HepG2 (cell line): ENCODE measurements at regions of chr1 and their contacts with region 1.

Region 1: DNA sequence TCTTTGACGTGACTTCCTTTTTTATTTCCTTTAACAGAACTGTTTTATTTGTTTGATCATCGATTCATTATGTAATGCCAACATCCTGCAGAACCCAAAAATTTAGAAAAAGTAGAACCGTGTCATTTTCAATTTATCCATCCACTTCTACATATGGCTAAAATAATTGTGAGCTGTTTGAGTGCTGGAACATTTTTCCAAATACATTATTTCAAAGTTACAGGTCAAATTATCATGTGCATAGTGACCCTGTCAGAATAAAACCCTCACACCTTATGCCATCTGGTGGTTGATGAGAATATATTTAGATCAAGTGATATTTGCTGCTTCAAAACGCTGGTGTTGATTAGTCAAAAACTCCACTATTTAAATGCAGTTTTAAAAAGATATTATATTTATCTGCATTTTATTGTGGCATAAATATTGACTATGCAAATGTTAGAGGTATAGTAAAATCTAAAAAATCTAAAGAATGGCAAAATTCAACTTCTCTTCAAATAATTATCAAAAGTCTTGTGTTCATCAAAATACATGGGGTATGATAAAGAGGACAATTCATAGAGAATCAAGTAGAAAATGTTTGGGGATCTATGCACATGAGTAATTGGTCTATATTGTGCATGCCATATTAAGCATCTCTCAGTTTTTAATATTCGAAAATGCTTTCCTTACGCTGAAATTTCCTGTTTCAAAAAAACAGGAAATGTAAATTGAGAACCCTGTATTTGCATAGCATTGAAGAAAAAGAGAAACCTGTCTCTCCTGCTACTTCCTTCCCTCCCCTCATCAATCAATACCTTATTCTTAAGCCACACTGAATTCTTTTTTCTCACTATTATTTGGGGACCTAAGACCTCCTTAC is 39.7 kb downstream of the UBE2U start:
- DNase-seq: peak; percentile 14
- ATAC-seq: no peak
- H3K4me3 ChIP-seq: no peak overlapping the region
- H3K27ac ChIP-seq: no peak overlapping the region
- H3K4me1 ChIP-seq: peaks cover 15% of the 10 kb centered on the region; the same call in 1 of the 2 replicates
- H3K27me3 ChIP-seq: peaks cover 0 to 2% of the 10 kb centered on the region in 2 experiments; a peak in 1 of 5 replicates
- CTCF ChIP-seq: peak; percentile 37
- EP300 ChIP-seq: no peak
- POLR2A ChIP-seq: no peak
- RAD21 ChIP-seq: no peak

Region 2: GRCh38 chr1:63316984-63317816 is 925.9 kb before region 1 on chr1:
- CTCF ChIA-PET with region 1: no interaction called
- POLR2A ChIA-PET with region 1: no interaction called
- in situ Hi-C with region 1: no loop called
- intact Hi-C with region 1: loop called (anchors 5 kb)
- DNase-seq: peak; percentile 41
- ATAC-seq: peak; percentile 95
- H3K4me3 ChIP-seq: peak overlapping the region; percentile 64 to 73 (median 67)
- H3K27ac ChIP-seq: no peak overlapping the region
- H3K4me1 ChIP-seq: peaks cover 8% of the 10 kb centered on the region; the same call in 1 of the 2 replicates
- H3K27me3 ChIP-seq: peaks cover 9 to 50% of the 10 kb centered on the region in 2 experiments
- CTCF ChIP-seq: peak; percentile 87
- EP300 ChIP-seq: no peak
- POLR2A ChIP-seq: no peak
- RAD21 ChIP-seq: peak; percentile 59; the same call in 1 of the 2 replicates

Region 3: DNA sequence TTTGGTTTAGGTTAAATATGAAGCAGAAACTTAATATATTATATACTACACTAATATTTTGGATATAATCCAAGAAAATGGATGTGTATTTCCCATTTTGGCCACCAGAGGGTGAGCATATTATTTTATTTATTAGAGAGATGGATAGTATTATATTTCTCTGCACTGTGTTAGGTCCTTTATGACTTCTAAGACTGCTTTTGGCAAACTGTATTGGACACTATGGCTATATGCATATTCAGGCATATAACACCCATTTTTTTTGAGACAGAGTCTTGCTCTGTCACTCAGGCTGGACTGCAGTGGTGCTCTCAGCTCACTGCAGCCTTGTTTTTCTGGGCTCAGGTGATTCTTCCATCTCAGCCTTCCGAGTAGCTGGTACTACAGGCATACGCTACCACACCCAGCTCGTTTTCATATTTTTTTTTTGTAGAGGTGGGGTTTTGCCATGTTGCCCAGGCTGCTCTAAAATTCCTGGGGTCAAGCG is 667.7 kb before region 1 on chr1:
- CTCF ChIA-PET with region 1: interaction called, 12 read pairs
- POLR2A ChIA-PET with region 1: no interaction called
- in situ Hi-C with region 1: no loop called
- intact Hi-C with region 1: loop called (anchors 5 kb)
- DNase-seq: no peak
- ATAC-seq: peak; percentile 32; the same call in 2 of the 3 replicates
- H3K4me3 ChIP-seq: no peak overlapping the region
- H3K27ac ChIP-seq: no peak overlapping the region
- H3K4me1 ChIP-seq: no peaks in the 10 kb centered on the region
- H3K27me3 ChIP-seq: no peaks in the 10 kb centered on the region
- CTCF ChIP-seq: peak; percentile 42
- EP300 ChIP-seq: no peak
- POLR2A ChIP-seq: no peak
- RAD21 ChIP-seq: no peak

Region 4: GRCh38 chr1:63674238-63674864 is 568.8 kb before region 1 on chr1:
- CTCF ChIA-PET with region 1: interaction called, 3 read pairs
- POLR2A ChIA-PET with region 1: no interaction called
- in situ Hi-C with region 1: no loop called
- intact Hi-C with region 1: loop called (anchors 1 kb)
- DNase-seq: peak; percentile 94
- ATAC-seq: peak; percentile 95
- H3K4me3 ChIP-seq: 0 out of 6 replicates have a peak overlapping the region, but pooled peaks of 1 of the 3 experiments have one; percentile 6
- H3K27ac ChIP-seq: peak overlapping the region; percentile 54
- H3K4me1 ChIP-seq: peaks cover 38% of the 10 kb centered on the region
- H3K27me3 ChIP-seq: no peaks in the 10 kb centered on the region
- CTCF ChIP-seq: peak; percentile 96
- EP300 ChIP-seq: no peak; a peak in 1 of 4 replicates
- POLR2A ChIP-seq: no peak
- RAD21 ChIP-seq: peak; percentile 71

Region 5: DNA sequence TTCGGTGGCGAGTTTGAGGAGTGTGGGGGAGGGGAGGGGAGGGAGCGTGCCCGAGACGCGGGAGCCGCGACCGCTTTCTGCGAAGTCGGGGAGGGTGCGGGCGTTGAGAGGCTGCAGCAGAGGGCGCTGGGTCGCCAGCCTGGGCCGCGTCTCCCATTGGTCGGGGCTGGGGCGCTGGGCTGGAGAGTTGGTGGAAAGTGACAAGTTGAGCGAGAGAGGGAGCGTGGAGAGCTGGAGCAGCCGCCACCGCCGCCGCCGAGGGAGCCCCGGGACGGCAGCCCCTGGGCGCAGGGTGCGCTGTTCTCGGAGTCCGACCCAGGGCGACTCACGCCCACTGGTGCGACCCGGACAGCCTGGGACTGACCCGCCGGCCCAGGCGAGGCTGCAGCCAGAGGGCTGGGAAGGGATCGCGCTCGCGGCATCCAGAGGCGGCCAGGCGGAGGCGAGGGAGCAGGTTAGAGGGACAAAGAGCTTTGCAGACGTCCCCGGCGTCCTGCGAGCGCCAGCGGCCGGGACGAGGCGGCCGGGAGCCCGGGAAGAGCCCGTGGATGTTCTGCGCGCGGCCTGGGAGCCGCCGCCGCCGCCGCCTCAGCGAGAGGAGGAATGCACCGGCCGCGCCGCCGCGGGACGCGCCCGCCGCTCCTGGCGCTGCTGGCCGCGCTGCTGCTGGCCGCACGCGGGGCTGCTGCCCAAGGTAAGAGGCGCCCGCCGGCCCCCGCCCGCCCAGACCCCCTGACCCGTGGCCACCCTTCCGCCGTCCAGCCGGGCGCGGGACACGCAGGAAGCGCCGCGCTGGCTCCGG is 469.1 kb before region 1 on chr1 and contains the start of gene ROR1:
- CTCF ChIA-PET with region 1: no interaction called
- POLR2A ChIA-PET with region 1: no interaction called
- in situ Hi-C with region 1: no loop called
- intact Hi-C with region 1: loop called (anchors 10 kb)
- DNase-seq: peak; percentile 60
- ATAC-seq: peak; percentile 97
- H3K4me3 ChIP-seq: peak within 1 kb of the TSS; percentile 61 to 80 (median 70)
- H3K27ac ChIP-seq: no peak within 1 kb of the TSS
- H3K4me1 ChIP-seq: peaks cover 40% of the 10 kb centered on the region
- H3K27me3 ChIP-seq: peaks cover 0 to 22% of the 10 kb centered on the region in 2 experiments; a peak in 1 of 5 replicates
- CTCF ChIP-seq: peak; percentile 92
- EP300 ChIP-seq: no peak
- POLR2A ChIP-seq: no peak
- RAD21 ChIP-seq: peak; percentile 45
- total RNA-seq, gene ROR1: 1.6 and 2.3 TPM in 2 replicates

Region 6: GRCh38 chr1:64136752-64137411 is 106.2 kb before region 1 on chr1:
- CTCF ChIA-PET with region 1: no interaction called
- POLR2A ChIA-PET with region 1: no interaction called
- in situ Hi-C with region 1: no loop called
- intact Hi-C with region 1: loop called (anchors 2 kb)
- DNase-seq: peak; percentile 56
- ATAC-seq: peak; percentile 90
- H3K4me3 ChIP-seq: no peak overlapping the region
- H3K27ac ChIP-seq: no peak overlapping the region
- H3K4me1 ChIP-seq: no peaks in the 10 kb centered on the region
- H3K27me3 ChIP-seq: no peaks in the 10 kb centered on the region
- CTCF ChIP-seq: peak; percentile 82
- EP300 ChIP-seq: no peak
- POLR2A ChIP-seq: no peak
- RAD21 ChIP-seq: peak; percentile 46; the same call in 1 of the 2 replicates

Region 7: GRCh38 chr1:64173336-64173940 is 69.7 kb before region 1 on chr1:
- CTCF ChIA-PET with region 1: no interaction called
- POLR2A ChIA-PET with region 1: no interaction called
- in situ Hi-C with region 1: no loop called
- intact Hi-C with region 1: no loop called
- DNase-seq: no peak
- ATAC-seq: no peak
- H3K4me3 ChIP-seq: no peak overlapping the region
- H3K27ac ChIP-seq: no peak overlapping the region
- H3K4me1 ChIP-seq: no peaks in the 10 kb centered on the region
- H3K27me3 ChIP-seq: no peaks in the 10 kb centered on the region
- CTCF ChIP-seq: no peak
- EP300 ChIP-seq: no peak
- POLR2A ChIP-seq: no peak
- RAD21 ChIP-seq: no peak

Region 8: DNA sequence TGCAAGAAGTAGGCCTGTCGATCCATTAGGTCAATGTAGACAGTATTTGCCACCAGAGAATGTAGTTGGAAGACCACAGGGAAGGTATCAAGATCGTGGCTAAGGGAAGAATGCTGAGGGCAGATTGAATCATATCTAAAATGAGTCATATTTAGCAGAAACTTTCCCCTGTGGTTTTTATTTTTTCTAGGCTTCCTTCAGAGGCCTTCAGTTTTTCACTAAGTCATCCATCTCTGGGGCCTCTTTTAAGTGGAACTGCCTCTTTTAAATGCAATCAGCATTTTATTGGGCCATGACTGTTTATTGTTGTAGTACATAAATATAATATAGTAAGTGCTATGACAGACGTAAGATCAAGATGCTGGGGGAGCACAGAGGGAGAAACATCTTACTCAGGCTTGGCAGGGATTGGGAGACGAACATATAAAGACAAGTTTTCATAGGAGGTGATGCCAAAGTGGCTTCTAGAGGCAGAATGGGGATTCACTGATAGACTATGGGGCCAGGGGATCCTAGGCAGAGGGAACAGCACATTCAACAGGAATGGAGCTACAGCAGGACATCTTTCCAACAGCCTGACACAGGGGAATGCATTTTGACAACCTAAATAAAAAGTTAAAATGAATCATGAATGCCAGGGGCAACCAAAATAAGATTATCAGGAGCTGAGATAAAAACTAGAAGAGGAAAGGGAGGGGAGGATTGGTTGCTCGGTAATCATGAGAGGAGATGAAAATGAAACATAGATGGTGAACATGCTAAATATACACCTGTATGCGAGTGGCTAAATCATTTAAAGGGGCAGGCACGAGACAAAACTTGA is 19.6 kb before region 1 on chr1:
- CTCF ChIA-PET with region 1: no interaction called
- POLR2A ChIA-PET with region 1: no interaction called
- in situ Hi-C with region 1: no loop called
- intact Hi-C with region 1: no loop called
- DNase-seq: no peak
- ATAC-seq: no peak
- H3K4me3 ChIP-seq: no peak overlapping the region
- H3K27ac ChIP-seq: no peak overlapping the region
- H3K4me1 ChIP-seq: no peaks in the 10 kb centered on the region
- H3K27me3 ChIP-seq: 0 out of 5 replicates have a peak, but pooled peaks cover 0 to 4% of the 10 kb centered on the region in 2 experiments
- CTCF ChIP-seq: no peak
- EP300 ChIP-seq: no peak
- POLR2A ChIP-seq: no peak
- RAD21 ChIP-seq: no peak

Region 9: DNA sequence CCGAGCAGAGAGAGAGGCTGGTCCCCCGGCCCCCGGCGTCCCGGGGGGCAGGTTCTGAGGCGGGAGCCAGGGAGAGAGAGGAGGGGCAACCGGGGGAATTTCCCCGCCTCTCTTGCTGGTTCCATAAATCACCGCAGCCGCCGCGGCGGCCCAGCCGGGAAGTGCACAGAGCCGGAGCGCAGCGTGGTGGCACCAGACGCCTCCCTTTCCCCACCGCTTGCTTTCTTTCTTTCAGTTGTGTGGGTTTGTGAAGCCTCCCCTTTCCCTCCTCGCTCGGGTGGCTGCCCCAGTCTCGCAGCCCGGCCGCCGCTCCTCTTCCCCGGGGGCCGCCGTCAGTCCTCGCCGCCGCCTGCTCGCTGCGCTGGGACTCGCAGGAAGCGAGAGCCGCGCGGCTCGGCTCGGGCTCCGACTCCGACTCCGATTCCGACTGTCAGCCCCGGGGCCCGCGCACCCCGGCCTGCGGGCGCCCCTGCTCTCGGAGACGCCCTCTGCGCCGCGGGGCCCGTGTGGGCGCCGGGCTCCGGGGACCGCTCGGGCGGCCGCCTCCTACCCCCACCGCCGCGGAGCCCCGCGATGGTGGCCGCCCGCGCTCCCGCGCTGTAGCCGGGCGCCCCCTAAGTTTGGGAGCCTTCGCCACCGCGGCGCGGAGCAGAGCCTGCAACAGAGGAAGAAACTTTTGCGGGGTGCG is 227.0 kb after region 1 on chr1 and contains the start of gene CACHD1:
- CTCF ChIA-PET with region 1: no interaction called
- POLR2A ChIA-PET with region 1: no interaction called
- in situ Hi-C with region 1: no loop called
- intact Hi-C with region 1: no loop called
- DNase-seq: no peak
- ATAC-seq: peak; percentile 86
- H3K4me3 ChIP-seq: peak within 1 kb of the TSS; percentile 40 to 70 (median 53); a peak in 5 of 6 replicates
- H3K27ac ChIP-seq: no peak within 1 kb of the TSS
- H3K4me1 ChIP-seq: no peaks in the 10 kb centered on the region
- H3K27me3 ChIP-seq: peaks cover 5 to 48% of the 10 kb centered on the region in 2 experiments; a peak in 4 of 5 replicates
- CTCF ChIP-seq: 0 out of 2 replicates have a peak, but pooled peaks have one; percentile 9
- EP300 ChIP-seq: no peak
- POLR2A ChIP-seq: no peak
- RAD21 ChIP-seq: 0 out of 2 replicates have a peak, but pooled peaks have one; percentile 4
- total RNA-seq, gene CACHD1: 0.11 TPM in 1 of 2 replicates, not detected in the other